ENCODE measurements at regions of chr3 and their contacts with region 1.

Region 1: DNA sequence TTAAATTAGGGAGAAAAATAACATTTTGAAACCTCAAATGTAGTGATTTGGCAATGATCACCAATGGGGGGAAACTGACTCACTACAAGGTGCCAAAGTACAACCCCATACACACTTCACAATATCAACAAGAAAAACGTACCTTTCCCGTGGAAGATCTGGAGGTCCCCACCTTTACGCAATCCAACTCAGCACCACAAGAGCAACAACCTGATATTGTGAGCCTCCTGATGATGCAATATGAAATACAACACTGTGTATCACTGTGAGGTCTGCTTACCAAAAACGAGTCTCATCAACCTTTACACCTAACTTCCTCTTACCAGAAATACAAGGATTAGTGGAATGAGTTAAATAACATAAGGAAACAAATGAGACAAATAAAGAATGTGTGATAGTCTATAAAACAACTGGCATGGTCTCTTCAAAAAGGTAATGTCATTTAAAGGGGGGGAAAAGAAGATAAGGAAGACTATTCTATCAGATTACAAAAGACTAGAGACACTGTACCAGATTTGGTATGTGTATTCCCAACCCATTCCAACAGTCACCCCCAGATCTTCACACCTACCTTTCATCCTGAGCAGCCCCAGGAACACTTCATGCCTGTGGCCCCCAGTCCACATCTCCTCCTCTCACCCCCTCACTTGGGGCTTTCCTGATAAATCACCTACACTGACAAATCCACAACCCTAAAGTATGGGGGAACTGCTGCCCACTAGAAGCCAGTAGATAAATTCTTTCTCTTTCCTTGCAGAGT is 27.7 kb downstream of the DLG1 start:
- DNase-seq: no peak
- H3K4me3 ChIP-seq: no peak overlapping the region
- H3K27ac ChIP-seq: no peak overlapping the region
- H3K4me1 ChIP-seq: peaks cover 0 to 9% (median 0%) of the 10 kb centered on the region in 3 donors
- H3K27me3 ChIP-seq: no peaks in the 10 kb centered on the region
- CTCF ChIP-seq: no peak

Region 2: GRCh38 chr3:197501879-197502620 is 231.3 kb after region 1 on chr3:
- intact Hi-C with region 1: loop called (anchors 10 kb)
- DNase-seq: peak in 2 of 5 donors; percentile 40 to 73
- H3K4me3 ChIP-seq: no peak overlapping the region
- H3K27ac ChIP-seq: no peak overlapping the region
- H3K4me1 ChIP-seq: no peaks in the 10 kb centered on the region
- H3K27me3 ChIP-seq: no peaks in the 10 kb centered on the region
- CTCF ChIP-seq: peak; percentile 66

Region 3: GRCh38 chr3:197554562-197555280 is 284.0 kb after region 1 on chr3:
- intact Hi-C with region 1: no loop called
- DNase-seq: peak; percentile 97 to 99 (median 98)
- H3K4me3 ChIP-seq: peak overlapping the region; percentile 75 to 88 (median 78)
- H3K27ac ChIP-seq: peak overlapping the region; percentile 88 to 97
- H3K4me1 ChIP-seq: peaks cover 0 to 13% (median 4%) of the 10 kb centered on the region in 3 donors
- H3K27me3 ChIP-seq: no peaks in the 10 kb centered on the region
- CTCF ChIP-seq: peak; percentile 63

Measured in kidney (tissue), 22 donors.